Calu3 (cell line): ENCODE measurements at regions of chr3 and their contacts with region 1.

Region 1: DNA sequence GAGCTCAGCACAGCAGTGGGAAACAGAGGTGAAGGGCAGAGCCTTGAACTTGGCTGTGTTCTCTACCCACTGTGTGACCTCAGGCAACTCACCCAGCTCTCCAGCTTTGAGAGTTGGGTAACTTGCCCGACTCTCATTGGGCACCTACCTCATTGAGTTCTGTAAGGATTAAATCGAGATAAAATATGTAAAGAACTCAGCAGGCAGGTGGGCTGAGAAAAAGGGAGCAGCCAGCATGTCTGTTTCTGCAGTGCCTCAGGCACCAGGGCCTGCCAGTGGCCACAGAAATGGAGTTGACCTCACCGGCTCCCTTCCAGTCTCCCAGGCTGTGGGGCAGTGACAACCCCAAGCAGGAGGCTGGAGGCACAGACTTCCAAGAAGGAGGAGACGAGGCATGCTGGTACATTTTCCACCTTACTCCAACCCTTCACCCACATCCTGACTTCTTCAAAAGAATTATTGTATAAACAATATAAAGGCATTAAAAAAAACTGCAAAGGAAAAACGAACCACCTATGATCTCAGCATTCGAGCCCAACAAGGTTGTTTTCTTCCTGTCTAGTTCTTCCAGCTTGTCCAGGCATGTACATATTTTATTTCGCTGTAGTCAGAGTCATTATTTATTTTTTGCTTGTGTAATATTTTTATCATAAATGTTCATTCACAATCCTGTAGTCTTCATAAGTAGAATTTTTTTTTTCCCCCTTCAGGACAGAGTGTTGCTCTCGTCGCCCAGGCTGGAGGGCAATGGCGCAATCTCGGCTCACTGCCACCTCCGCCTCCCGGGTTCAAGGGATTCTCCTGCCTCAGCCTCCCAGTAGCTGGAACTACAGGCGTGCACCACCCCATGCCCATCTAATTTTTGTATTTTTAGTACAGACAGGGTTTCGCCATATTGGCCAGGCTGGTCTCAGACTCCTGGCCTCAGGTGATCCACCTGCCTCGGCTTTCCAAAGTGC is 54.4 kb upstream of the TFRC start:
- DNase-seq: no peak
- H3K4me3 Mint-ChIP-seq: no peak overlapping the region
- H3K27ac Mint-ChIP-seq: no peak overlapping the region
- H3K4me1 Mint-ChIP-seq: peaks cover 3% of the 10 kb centered on the region
- H3K27me3 Mint-ChIP-seq: no peaks in the 10 kb centered on the region
- CTCF ChIP-seq: no peak

Region 2: DNA sequence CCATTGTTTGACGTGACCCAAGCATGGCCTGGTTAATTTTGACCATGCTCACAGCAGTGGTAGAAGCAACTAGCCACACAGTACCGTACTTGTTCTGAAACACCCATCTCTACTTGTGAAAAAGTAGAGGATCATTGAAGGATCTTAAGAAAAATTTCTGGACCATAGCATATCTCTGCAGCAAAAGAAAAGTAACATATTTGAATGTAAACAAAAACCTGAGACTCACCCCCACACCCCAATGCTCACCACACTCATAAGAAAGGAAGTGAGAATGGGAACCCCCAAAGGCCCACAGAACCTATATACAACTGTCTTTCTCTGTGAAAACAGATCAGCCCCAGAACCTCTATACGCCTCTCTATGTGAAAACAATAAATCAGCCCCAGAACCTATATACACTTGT is 20.6 kb before region 1 on chr3:
- CTCF ChIA-PET with region 1: interaction called, 10 read pairs
- intact Hi-C with region 1: no loop called
- DNase-seq: no peak
- H3K4me3 Mint-ChIP-seq: no peak overlapping the region
- H3K27ac Mint-ChIP-seq: no peak overlapping the region
- H3K4me1 Mint-ChIP-seq: no peaks in the 10 kb centered on the region
- H3K27me3 Mint-ChIP-seq: no peaks in the 10 kb centered on the region
- CTCF ChIP-seq: no peak

Region 3: DNA sequence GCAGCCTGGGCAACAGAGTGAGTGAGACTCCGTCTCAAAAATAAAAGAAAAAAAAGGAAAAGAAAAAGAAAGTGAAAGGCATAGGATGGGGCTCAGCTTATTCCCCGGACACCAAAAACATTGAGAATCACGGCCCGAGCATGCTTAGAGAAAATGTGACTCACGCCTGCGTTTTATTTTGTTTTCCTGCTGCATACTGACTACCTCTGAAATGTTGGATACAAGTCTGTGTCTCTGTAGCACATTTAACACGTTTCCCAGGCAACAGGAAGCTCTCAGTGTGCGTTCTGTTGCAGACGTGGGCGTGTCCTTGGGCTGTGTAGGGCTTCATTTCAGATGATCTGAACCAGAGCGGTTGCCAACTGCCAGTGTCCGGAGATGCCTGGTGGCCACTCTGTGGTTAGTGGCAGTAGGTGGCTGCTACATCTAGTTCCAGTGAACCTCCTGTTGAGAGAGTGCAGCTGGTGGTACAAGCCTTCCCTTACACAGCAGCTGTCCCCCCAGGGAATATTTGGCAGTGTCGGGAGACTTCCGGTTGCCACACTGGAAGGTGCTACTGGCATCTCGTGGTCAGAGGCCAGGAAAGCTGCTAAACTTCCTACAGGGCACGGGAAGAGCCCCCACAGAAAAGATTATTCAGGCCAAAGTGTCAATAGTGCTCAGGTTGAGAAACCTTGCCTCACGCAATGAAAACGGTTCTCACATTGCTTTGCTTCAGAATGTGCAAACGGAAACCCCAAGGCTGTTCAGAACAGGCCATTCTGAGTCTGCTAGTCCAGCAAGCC is 83.1 kb after region 1 on chr3:
- CTCF ChIA-PET with region 1: no interaction called
- intact Hi-C with region 1: no loop called
- DNase-seq: no peak
- H3K4me3 Mint-ChIP-seq: no peak overlapping the region
- H3K27ac Mint-ChIP-seq: no peak overlapping the region
- H3K4me1 Mint-ChIP-seq: no peaks in the 10 kb centered on the region
- H3K27me3 Mint-ChIP-seq: peaks cover 51% of the 10 kb centered on the region
- CTCF ChIP-seq: no peak

Region 4: DNA sequence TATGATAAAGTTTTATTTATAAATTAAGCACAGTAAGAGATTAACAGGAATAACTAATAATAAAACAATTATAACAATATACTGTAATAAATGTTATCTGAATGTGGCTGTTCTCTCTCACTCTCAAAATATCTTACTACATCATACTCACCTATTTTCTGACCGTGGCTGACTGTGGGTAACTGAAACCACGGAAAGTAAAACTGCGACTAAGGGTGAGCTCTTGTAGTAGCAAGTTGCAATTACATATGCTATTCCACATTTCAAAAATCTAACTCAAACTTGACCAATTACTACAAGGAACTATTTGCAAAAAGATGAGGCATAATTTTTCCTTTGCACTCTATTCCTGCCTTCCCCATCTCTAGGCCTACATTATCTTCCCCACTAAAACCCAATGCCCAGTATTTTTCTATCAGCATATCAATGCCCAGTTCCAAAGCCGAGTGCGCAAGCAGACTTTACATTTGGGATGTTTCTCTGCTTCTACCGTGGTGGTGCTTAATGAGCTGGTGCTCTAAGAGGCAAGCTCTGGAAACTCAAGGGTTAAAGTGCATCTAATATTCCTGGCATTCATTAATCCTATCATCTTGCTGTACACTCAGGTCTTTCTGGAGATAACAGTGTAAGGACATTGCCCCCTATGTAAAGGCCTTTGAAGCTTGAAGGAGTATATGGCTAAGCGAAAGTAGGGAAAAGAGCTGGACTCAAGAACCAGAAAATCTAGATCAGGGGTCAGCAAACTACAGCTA is 144.6 kb after region 1 on chr3:
- CTCF ChIA-PET with region 1: no interaction called
- intact Hi-C with region 1: no loop called
- DNase-seq: no peak
- H3K4me3 Mint-ChIP-seq: no peak overlapping the region
- H3K27ac Mint-ChIP-seq: no peak overlapping the region
- H3K4me1 Mint-ChIP-seq: peaks cover 24% of the 10 kb centered on the region
- H3K27me3 Mint-ChIP-seq: no peaks in the 10 kb centered on the region
- CTCF ChIP-seq: no peak